MCF 10A (cell line): ENCODE measurements at regions of chr7 and their contacts with region 1.

Region 1: GRCh38 chr7:25839084-25839769 is 312.8 kb upstream of the NFE2L3 start:
- DNase-seq: peak; percentile 28
- H3K4me3 Mint-ChIP-seq: no peak overlapping the region
- H3K27ac Mint-ChIP-seq: no peak overlapping the region
- H3K4me1 Mint-ChIP-seq: no peaks in the 10 kb centered on the region
- H3K27me3 Mint-ChIP-seq: peaks cover 20% of the 10 kb centered on the region
- CTCF ChIP-seq: peak; percentile 36

Region 2: DNA sequence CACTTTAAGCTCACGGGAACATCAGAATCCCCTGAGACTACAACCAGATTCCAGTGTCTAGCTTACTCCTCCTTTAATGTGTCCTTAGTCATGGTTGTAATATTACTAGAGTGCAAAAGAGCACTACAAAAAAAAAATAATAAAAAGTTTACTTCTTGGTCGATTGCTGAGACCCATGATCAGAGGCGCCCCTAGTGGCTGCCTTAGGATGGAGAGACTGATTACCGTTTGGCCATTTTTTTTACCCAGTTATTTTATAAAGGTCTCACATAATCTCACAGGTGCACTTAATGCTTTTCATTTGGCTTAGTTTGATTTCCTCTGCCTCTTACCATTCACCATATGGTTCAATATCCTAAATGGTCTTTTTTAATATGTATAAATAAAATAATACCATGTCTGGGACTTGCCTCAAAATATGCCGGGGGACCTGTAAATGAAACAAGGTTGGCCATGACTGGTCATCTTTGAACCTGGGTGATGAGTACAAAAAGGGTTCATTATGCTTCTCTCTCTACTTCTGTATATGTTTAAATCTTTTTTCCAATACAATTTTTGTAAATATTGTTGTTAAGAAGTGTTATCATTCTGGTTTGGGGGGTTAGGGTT is 18.7 kb before region 1 on chr7:
- CTCF ChIA-PET with region 1: interaction called, 10 read pairs
- POLR2A ChIA-PET with region 1: no interaction called
- intact Hi-C with region 1: no loop called
- DNase-seq: peak; percentile 49
- H3K4me3 Mint-ChIP-seq: no peak overlapping the region
- H3K27ac Mint-ChIP-seq: no peak overlapping the region
- H3K4me1 Mint-ChIP-seq: no peaks in the 10 kb centered on the region
- H3K27me3 Mint-ChIP-seq: peaks cover 66% of the 10 kb centered on the region
- CTCF ChIP-seq: peak; percentile 59

Region 3: DNA sequence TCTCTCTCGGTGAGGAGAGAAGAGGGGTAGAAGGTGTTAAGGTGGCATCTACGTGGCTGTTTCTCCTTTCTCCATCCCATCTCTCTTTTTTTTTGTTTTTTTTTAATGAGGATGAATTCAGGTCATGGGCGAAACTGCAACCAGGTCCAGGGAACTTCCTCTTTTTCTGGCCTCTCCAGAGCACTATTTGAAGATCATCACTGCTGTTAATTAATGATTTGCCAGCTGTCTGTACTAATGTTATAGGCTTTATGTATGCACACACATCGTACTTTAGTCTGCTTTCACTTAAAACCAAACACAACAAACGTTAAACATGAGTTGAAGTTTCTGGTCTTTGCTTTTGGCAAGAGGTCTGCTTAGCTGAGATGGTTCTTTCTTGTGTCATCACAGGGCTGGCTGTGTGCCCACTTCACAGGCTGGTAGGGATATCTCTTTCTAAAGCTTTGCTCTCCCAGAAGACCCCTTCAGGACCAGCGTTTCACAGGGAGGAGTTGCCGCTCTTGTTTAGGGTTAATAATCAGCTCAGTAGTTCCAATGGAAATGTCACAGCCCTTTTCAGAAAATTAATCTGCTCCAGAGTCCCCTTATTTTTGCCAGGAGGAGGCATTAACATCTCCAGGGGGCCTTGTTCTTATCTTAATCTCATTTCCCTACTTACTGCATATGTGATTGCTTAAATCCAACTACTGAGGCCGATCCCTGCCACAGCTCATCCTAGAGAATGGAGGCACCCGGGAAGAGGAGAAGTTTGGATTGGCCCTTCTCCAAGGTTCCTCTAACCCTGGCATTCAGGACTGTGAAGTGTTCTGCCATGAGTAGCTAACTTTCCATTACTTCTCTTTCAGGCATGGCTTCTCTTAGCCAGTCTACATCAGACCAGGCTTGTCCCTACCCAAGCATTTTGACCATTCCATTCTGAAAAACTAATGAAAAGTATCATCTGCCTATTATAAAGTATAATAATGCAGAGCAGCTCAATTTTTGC is 38.9 kb after region 1 on chr7:
- CTCF ChIA-PET with region 1: no interaction called
- POLR2A ChIA-PET with region 1: no interaction called
- intact Hi-C with region 1: no loop called
- DNase-seq: no peak
- H3K4me3 Mint-ChIP-seq: no peak overlapping the region
- H3K27ac Mint-ChIP-seq: no peak overlapping the region
- H3K4me1 Mint-ChIP-seq: no peaks in the 10 kb centered on the region
- H3K27me3 Mint-ChIP-seq: peaks cover 94% of the 10 kb centered on the region
- CTCF ChIP-seq: no peak